ENCODE measurements at regions of chr7 and their contacts with region 1.

Region 1: DNA sequence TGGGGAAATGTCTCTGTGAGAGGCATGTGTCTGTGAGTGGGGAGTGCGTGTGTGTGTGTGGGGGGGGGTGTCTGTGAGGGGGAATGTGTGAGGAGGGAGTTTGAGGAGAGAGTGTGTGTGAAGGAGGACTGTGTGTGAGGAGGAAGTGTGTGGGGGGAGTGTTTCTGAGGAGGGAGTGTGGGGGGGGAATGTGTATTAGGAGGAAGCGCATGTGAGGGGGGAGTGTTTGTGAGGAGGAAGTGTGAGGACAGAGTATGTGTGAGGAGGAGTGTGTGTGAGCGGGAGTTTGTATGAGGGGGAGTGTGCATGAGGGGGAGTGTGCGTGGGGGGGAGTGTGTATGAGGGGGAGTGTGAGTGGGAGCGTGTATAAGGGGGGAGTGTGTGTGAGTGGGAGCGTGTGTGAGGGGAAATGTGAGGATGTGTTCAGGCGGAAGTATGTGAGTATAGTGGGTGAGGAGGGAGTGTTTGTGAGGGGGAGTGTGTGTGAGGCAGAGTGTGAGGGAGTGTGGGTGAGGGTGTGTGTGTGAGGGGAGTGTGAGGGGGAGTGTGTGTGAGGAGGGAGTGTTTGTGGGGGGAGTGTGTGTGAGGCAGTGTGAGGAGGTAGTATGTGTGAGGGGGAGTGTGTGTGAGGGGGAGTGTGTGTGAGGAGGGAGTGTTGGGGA is 21.8 kb upstream of the PTPRN2 start:
- DNase-seq: no peak
- ATAC-seq: no peak
- H3K4me3 Mint-ChIP-seq: no peak overlapping the region
- H3K27ac Mint-ChIP-seq: no peak overlapping the region
- H3K4me1 Mint-ChIP-seq: peaks cover 14% of the 10 kb centered on the region
- H3K27me3 Mint-ChIP-seq: no peaks in the 10 kb centered on the region

Region 2: DNA sequence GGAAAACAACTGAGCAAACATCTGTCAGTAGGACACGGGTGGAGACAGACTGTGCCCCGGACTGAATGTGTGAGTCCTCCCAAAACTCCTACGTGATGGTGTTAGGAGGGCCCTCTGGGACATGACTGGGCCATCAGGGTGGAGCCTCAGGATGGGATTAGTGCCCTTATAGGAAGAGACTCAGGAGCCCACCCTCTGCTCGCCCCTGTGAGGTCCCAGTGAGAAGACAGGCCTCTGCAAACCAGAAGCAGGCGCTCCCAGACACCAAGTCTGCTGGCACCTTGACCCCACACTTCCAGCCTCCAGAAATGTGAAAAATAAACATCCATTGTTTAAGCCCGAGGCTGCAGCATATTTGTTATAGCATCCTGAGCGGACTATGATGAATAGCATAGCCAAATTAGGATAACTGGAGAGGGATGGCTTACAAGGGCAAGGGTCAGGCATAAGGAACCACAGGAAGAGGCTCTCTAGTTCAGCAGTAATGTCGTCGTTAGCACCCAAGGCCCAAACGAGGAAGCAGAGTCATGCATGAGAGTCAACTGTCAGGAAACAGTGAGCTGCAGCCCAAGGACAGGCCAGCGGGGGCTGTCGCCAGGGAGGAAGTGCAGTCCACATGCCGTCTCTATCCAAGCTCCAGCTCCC is 72.5 kb before region 1 on chr7:
- POLR2A ChIA-PET with region 1: no interaction called
- DNase-seq: no peak
- ATAC-seq: no peak
- H3K4me3 Mint-ChIP-seq: no peak overlapping the region
- H3K27ac Mint-ChIP-seq: no peak overlapping the region
- H3K4me1 Mint-ChIP-seq: no peaks in the 10 kb centered on the region
- H3K27me3 Mint-ChIP-seq: no peaks in the 10 kb centered on the region

Region 3: GRCh38 chr7:158858592-158859503 is 249.4 kb after region 1 on chr7:
- POLR2A ChIA-PET with region 1: interaction called, 10 read pairs
- DNase-seq: no peak
- ATAC-seq: no peak
- H3K4me3 Mint-ChIP-seq: peak overlapping the region; percentile 78
- H3K27ac Mint-ChIP-seq: peak overlapping the region; percentile 76
- H3K4me1 Mint-ChIP-seq: peaks cover 42% of the 10 kb centered on the region
- H3K27me3 Mint-ChIP-seq: no peaks in the 10 kb centered on the region